Mammary epithelial cell (primary cell): ENCODE measurements at regions of chr22 and their contacts with region 1.

Region 1: GRCh38 chr22:37330200-37331033 is 48.1 kb downstream of the CYTH4 start:
- DNase-seq: peak; percentile 65
- H3K4me3 ChIP-seq: no peak overlapping the region
- H3K27ac ChIP-seq: peak overlapping the region; percentile 85
- H3K4me1 ChIP-seq: peaks cover 55% of the 10 kb centered on the region
- H3K27me3 ChIP-seq: no peaks in the 10 kb centered on the region
- CTCF ChIP-seq: peak in 1 of 2 donors; percentile 59

Region 2: GRCh38 chr22:37260901-37261336 is 69.5 kb before region 1 on chr22:
- CTCF ChIA-PET with region 1: no interaction called
- dilution Hi-C with region 1: loop called (anchors 5 kb)
- in situ Hi-C with region 1: no loop called
- intact Hi-C with region 1: no loop called
- DNase-seq: peak; percentile 35
- H3K4me3 ChIP-seq: no peak overlapping the region
- H3K27ac ChIP-seq: no peak overlapping the region
- H3K4me1 ChIP-seq: peaks cover 23% of the 10 kb centered on the region
- H3K27me3 ChIP-seq: no peaks in the 10 kb centered on the region
- CTCF ChIP-seq: peak; percentile 91 to 95

Region 3: GRCh38 chr22:37345863-37346504 is 15.6 kb after region 1 on chr22:
- CTCF ChIA-PET with region 1: no interaction called
- dilution Hi-C with region 1: no loop called
- in situ Hi-C with region 1: no loop called
- intact Hi-C with region 1: no loop called
- DNase-seq: peak; percentile 65
- H3K4me3 ChIP-seq: no peak overlapping the region
- H3K27ac ChIP-seq: no peak overlapping the region
- H3K4me1 ChIP-seq: peaks cover 12% of the 10 kb centered on the region
- H3K27me3 ChIP-seq: no peaks in the 10 kb centered on the region
- CTCF ChIP-seq: no peak

Region 4: DNA sequence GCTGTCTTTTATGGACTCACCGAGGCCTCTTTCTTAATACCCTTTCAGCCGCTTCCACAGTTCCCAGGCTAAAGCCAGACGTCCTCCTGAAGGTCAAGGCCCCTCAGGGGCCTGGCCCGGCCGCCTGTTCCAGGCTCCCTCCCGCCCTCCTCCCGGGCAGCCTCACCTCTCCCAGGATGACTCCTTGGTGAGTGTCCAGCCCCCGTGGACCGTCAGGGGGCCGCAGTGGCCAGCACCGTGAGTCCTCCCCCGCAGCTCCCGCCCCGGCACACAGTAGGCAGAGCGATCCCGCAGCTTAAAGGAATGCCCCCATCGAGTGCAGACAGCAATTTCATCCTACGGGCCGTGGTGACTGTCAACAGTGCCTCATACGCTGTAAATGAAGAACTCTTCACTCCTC is 63.9 kb after region 1 on chr22:
- CTCF ChIA-PET with region 1: no interaction called
- dilution Hi-C with region 1: loop called (anchors 5 kb)
- in situ Hi-C with region 1: no loop called
- intact Hi-C with region 1: no loop called
- DNase-seq: no peak
- H3K4me3 ChIP-seq: no peak overlapping the region
- H3K27ac ChIP-seq: no peak overlapping the region
- H3K4me1 ChIP-seq: no peaks in the 10 kb centered on the region
- H3K27me3 ChIP-seq: no peaks in the 10 kb centered on the region
- CTCF ChIP-seq: no peak

Region 5: DNA sequence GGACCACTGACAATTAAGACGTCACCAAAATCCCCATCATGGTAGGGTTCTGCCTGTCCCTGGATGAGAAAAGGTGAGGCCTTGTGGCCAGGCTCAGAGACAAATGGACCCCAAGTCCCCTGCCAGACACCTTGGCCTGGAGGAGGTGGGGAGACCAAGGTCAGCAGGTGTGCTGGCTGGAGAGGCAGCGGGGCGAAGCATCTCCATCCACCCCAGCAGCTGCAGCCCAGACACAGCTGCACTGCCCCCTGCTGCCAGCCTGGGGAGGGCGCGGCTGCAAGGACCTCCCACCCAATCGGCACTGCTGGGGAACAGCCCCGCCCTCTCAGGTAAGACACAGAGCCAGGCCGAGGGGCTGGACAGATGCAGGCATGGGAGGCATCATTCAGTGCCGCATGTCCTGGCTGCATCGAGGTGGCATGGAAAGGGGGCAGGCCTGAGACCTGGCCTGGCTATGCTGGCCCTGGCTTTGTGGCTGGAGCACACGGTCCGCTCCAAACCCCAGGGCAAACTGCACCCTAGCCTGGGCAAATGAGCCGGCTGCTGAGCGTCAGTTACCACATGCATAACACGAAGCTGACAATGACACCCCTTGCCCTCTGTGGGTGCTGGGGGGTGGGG is 168.0 kb after region 1 on chr22:
- CTCF ChIA-PET with region 1: no interaction called
- dilution Hi-C with region 1: loop called (anchors 5 kb)
- in situ Hi-C with region 1: no loop called
- intact Hi-C with region 1: no loop called
- DNase-seq: no peak
- H3K4me3 ChIP-seq: no peak overlapping the region
- H3K27ac ChIP-seq: no peak overlapping the region
- H3K4me1 ChIP-seq: peaks cover 58% of the 10 kb centered on the region
- H3K27me3 ChIP-seq: no peaks in the 10 kb centered on the region
- CTCF ChIP-seq: peak; percentile 21 to 35

Region 6: GRCh38 chr22:37745548-37746365 is 415.3 kb after region 1 on chr22:
- CTCF ChIA-PET with region 1: no interaction called
- dilution Hi-C with region 1: loop called (anchors 10 kb)
- in situ Hi-C with region 1: no loop called
- intact Hi-C with region 1: no loop called
- DNase-seq: peak; percentile 85
- H3K4me3 ChIP-seq: peak overlapping the region; percentile 73 to 94 (median 75)
- H3K27ac ChIP-seq: peak overlapping the region; percentile 72
- H3K4me1 ChIP-seq: peaks cover 74% of the 10 kb centered on the region
- H3K27me3 ChIP-seq: no peaks in the 10 kb centered on the region
- CTCF ChIP-seq: no peak

Region 7: GRCh38 chr22:37849089-37849751 is 518.8 kb after region 1 on chr22 and contains the start of gene EIF3L:
- CTCF ChIA-PET with region 1: no interaction called
- dilution Hi-C with region 1: no loop called
- in situ Hi-C with region 1: no loop called
- intact Hi-C with region 1: no loop called
- DNase-seq: peak; percentile 87
- H3K4me3 ChIP-seq: peak within 1 kb of the TSS; percentile 70 to 92 (median 86)
- H3K27ac ChIP-seq: peak within 1 kb of the TSS; percentile 84
- H3K4me1 ChIP-seq: peaks cover 10% of the 10 kb centered on the region
- H3K27me3 ChIP-seq: no peaks in the 10 kb centered on the region
- CTCF ChIP-seq: no peak
- total RNA-seq, gene EIF3L: 350 to 368 TPM